Activated T-helper 1 cell treated with anti-CD3 and anti-CD28 coated beads, Interleukin-12 subunit alpha, Interleukin-12 subunit beta, Interleukin-2, Interleukin-4 antibody, amounts not matched to agents 30 ng/mL and 10 ng/mL and 1 ng/mL, durations not matched to agents 14 hours and 24 hours and 36 hours (primary cell): ENCODE measurements at regions of chr4 and their contacts with region 1.

Region 1: DNA sequence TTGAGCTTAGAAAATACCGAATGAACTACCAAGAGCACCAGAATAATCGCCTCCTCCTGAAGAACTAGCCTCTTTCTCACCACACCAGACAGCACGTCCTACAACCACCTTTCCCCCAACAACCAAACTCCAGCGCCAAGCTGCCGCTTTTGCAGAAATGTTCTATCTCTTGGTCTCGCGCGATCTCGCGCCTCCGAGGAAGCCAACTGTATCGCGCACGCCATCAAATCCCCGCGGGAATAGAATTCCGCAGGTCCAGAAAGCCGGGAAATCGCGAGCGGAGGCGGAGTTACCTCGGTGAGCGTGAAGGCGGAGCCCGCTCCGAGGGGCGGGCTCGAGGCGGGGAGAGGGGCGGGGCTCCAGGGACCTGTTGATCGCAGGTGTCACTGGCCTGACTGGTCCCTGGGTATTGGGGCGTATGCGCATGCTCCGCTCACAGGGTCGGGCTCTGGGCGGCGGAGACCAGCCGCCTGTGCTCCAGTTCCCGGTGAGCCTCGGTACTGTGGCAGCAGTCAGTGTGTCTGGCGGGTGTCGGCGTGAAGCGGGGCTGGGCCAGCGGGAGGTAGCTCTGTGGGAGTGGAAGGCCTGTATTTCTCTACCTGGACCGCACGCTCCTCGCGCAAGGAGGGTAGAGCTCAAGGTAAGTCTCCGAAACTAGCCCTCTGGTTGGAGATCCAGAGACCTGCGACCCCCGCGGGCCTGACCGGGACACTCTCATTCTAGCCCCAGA is at the start of gene USP53:
- DNase-seq: peak; percentile 90
- H3K4me3 Mint-ChIP-seq: peak within 1 kb of the TSS; percentile 95
- H3K27ac Mint-ChIP-seq: peak within 1 kb of the TSS; percentile 95
- H3K4me1 Mint-ChIP-seq: peaks cover 39% of the 10 kb centered on the region
- H3K27me3 Mint-ChIP-seq: peaks cover 5% of the 10 kb centered on the region
- total RNA-seq, gene USP53: 6.1 and 8.5 TPM in 2 replicates

Region 2: DNA sequence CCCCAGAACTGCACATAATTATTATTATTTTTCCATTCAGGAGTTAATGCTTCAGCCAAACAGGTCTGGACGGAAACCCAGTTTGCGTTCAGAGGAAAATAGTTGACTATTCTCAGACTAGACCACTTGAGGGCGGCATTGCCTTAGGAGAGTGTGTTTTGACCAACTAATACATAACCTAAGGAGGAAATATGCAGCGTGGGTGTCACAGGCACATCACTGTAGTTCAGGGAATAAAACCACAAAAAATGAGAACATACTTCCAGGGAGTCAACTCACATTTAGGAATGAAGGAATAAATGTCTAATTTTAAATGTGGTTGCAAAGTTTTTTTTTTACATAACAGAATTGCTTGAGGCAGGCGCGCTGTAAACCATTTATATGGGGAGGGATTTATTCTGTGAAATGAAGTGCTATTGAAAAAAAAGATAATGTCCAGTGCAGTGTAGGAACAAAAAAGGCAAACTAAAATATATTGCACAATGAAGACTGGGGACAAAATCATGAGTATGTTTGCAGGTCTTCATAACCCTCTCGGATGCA is 230.5 kb before region 1 on chr4:
- intact Hi-C with region 1: loop called (anchors 5 kb)
- DNase-seq: peak; percentile 20
- H3K4me3 Mint-ChIP-seq: no peak overlapping the region
- H3K27ac Mint-ChIP-seq: no peak overlapping the region
- H3K4me1 Mint-ChIP-seq: no peaks in the 10 kb centered on the region
- H3K27me3 Mint-ChIP-seq: peaks cover 4% of the 10 kb centered on the region

Region 3: GRCh38 chr4:119059221-119059620 is 153.2 kb before region 1 on chr4:
- intact Hi-C with region 1: no loop called
- DNase-seq: no peak
- H3K4me3 Mint-ChIP-seq: no peak overlapping the region
- H3K27ac Mint-ChIP-seq: no peak overlapping the region
- H3K4me1 Mint-ChIP-seq: no peaks in the 10 kb centered on the region
- H3K27me3 Mint-ChIP-seq: peaks cover 2% of the 10 kb centered on the region

Region 4: GRCh38 chr4:119070301-119070700 is 142.1 kb before region 1 on chr4:
- intact Hi-C with region 1: no loop called
- DNase-seq: no peak
- H3K4me3 Mint-ChIP-seq: no peak overlapping the region
- H3K27ac Mint-ChIP-seq: no peak overlapping the region
- H3K4me1 Mint-ChIP-seq: no peaks in the 10 kb centered on the region
- H3K27me3 Mint-ChIP-seq: peaks cover 3% of the 10 kb centered on the region

Region 5: GRCh38 chr4:119191505-119191904 is 20.9 kb before region 1 on chr4:
- intact Hi-C with region 1: no loop called
- DNase-seq: no peak
- H3K4me3 Mint-ChIP-seq: no peak overlapping the region
- H3K27ac Mint-ChIP-seq: no peak overlapping the region
- H3K4me1 Mint-ChIP-seq: no peaks in the 10 kb centered on the region
- H3K27me3 Mint-ChIP-seq: peaks cover 2% of the 10 kb centered on the region

Region 6: GRCh38 chr4:119238068-119238722 is 25.8 kb after region 1 on chr4:
- intact Hi-C with region 1: loop called (anchors 1 kb)
- DNase-seq: peak; percentile 31
- H3K4me3 Mint-ChIP-seq: peak overlapping the region; percentile 8
- H3K27ac Mint-ChIP-seq: peak overlapping the region; percentile 29
- H3K4me1 Mint-ChIP-seq: peaks cover 29% of the 10 kb centered on the region
- H3K27me3 Mint-ChIP-seq: no peaks in the 10 kb centered on the region

Region 7: DNA sequence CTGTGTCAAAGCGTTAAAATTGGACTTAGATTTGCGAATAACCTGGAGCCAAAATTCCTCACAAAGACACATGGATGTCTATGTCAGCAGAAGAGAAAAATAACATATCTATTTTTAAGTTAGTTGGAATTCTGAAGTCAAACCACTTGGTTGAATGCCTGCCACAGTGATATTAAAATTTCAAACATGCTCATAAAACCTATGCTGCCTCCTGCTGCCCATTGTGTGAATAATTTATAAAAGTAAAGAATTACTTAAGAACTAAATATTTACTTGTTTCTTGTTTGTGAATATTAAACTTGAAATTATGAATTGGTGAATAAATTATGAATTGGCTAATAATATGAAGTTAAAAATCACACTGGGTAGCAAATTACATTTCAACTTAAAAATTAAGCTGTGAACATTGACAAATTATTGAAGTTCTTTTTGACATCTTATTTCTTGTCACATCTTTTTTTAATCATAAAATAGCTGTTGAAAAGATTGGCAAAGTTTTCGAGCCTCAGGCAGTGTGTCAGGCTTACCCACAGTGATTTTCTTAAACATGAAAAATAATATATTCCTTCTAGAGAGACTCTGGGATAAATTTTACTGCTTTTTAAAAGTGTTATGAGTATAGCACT is 74.1 kb after region 1 on chr4:
- intact Hi-C with region 1: loop called (anchors 2 kb)
- DNase-seq: no peak
- H3K4me3 Mint-ChIP-seq: no peak overlapping the region
- H3K27ac Mint-ChIP-seq: no peak overlapping the region
- H3K4me1 Mint-ChIP-seq: peaks cover 12% of the 10 kb centered on the region
- H3K27me3 Mint-ChIP-seq: no peaks in the 10 kb centered on the region